ENCODE measurements at regions of chr10 and their contacts with region 1.

Region 1: GRCh38 chr10:62610649-62611229 is 193.8 kb upstream of the ADO start:
- DNase-seq: peak; percentile 77
- ATAC-seq: peak; percentile 90
- H3K4me3 Mint-ChIP-seq: no peak overlapping the region
- H3K27ac Mint-ChIP-seq: no peak overlapping the region
- H3K4me1 Mint-ChIP-seq: peaks cover 10% of the 10 kb centered on the region
- H3K27me3 Mint-ChIP-seq: no peaks in the 10 kb centered on the region

Region 2: GRCh38 chr10:62554632-62555199 is 56.0 kb before region 1 on chr10:
- CTCF ChIA-PET with region 1: no interaction called
- POLR2A ChIA-PET with region 1: no interaction called
- DNase-seq: peak; percentile 28
- ATAC-seq: no peak
- H3K4me3 Mint-ChIP-seq: no peak overlapping the region
- H3K27ac Mint-ChIP-seq: no peak overlapping the region
- H3K4me1 Mint-ChIP-seq: no peaks in the 10 kb centered on the region
- H3K27me3 Mint-ChIP-seq: peaks cover 19% of the 10 kb centered on the region

Region 3: DNA sequence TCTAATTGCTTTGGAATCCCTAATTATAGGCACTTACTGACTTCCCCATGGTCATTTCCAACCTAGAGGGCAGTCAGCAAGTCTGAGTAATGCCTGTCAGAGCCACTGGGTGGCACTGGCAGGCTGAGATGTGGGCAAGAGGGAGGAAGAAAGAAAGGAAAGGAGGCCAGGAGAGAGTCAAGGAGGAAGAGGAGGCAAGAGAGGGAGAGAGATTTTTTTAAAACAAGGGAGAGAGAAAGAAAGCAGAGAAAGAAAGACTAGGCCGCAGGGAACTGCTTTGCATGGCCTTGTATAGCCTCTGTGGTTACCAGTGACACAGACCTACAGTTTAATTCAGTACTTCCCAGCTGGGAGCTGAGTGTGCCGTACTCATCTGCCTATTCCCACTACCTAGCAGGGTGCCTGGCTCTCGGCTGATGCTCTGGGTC is 16.6 kb before region 1 on chr10:
- CTCF ChIA-PET with region 1: interaction called, 11 read pairs
- POLR2A ChIA-PET with region 1: no interaction called
- DNase-seq: peak; percentile 60
- ATAC-seq: peak; percentile 77
- H3K4me3 Mint-ChIP-seq: no peak overlapping the region
- H3K27ac Mint-ChIP-seq: no peak overlapping the region
- H3K4me1 Mint-ChIP-seq: peaks cover 3% of the 10 kb centered on the region
- H3K27me3 Mint-ChIP-seq: peaks cover 6% of the 10 kb centered on the region

Region 4: GRCh38 chr10:62681211-62681940 is 70.6 kb after region 1 on chr10:
- CTCF ChIA-PET with region 1: interaction called, 21 read pairs
- POLR2A ChIA-PET with region 1: no interaction called
- DNase-seq: peak; percentile 79
- ATAC-seq: peak; percentile 92
- H3K4me3 Mint-ChIP-seq: no peak overlapping the region
- H3K27ac Mint-ChIP-seq: peak overlapping the region; percentile 1
- H3K4me1 Mint-ChIP-seq: peaks cover 26% of the 10 kb centered on the region
- H3K27me3 Mint-ChIP-seq: no peaks in the 10 kb centered on the region

Region 5: GRCh38 chr10:62804356-62805230 is 193.9 kb after region 1 on chr10 and contains the start of gene ADO:
- CTCF ChIA-PET with region 1: interaction called, 16 read pairs
- POLR2A ChIA-PET with region 1: no interaction called
- DNase-seq: peak; percentile 83
- ATAC-seq: peak; percentile 89
- H3K4me3 Mint-ChIP-seq: peak within 1 kb of the TSS; percentile 93
- H3K27ac Mint-ChIP-seq: peak within 1 kb of the TSS; percentile 100
- H3K4me1 Mint-ChIP-seq: peaks cover 44% of the 10 kb centered on the region
- H3K27me3 Mint-ChIP-seq: peaks cover 7% of the 10 kb centered on the region
- total RNA-seq, gene ADO: 22.2 to 22.6 TPM

Region 6: DNA sequence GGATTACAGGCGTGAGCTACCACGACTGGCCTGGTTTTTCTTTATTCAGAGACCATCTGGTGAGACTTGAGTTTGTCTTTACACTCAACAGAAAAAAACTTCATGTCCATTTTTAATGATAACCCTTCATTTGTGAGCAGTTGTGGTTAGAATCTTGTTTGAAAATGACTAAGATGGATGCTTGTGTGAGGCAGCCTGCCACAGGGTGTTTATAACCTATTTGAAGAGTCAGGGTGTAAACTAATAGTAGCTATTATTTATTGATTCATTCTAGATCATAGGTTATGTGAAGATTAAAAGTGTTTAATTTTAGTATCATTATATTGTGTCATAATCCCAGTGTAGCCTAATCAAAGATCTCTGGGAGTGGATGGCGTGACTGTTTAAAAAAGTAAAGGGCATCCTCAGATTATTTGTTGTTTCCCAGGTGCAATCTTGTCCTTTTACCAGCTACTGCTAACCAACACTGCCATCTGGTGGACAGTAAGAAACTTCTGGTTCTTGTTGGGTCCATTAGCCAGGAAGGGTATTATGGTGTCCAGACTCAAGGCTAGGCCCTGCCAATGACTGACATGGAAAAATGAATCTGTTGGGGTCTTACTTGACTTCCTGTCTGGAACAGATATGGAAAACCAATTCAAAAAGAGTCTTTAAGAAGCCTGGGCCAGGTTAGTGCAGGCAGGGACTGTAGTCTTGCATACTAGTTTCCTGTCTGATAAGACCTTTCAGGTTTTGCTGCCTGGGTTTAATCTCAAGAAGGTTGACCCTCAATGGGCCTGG is 547.3 kb after region 1 on chr10:
- CTCF ChIA-PET with region 1: interaction called, 32 read pairs
- POLR2A ChIA-PET with region 1: no interaction called
- DNase-seq: peak; percentile 67
- ATAC-seq: peak; percentile 78
- H3K4me3 Mint-ChIP-seq: no peak overlapping the region
- H3K27ac Mint-ChIP-seq: no peak overlapping the region
- H3K4me1 Mint-ChIP-seq: peaks cover 10% of the 10 kb centered on the region
- H3K27me3 Mint-ChIP-seq: no peaks in the 10 kb centered on the region